ENCODE measurements at regions of chr11 and their contacts with region 1.

Region 1: GRCh38 chr11:77019976-77020595 is 14.1 kb upstream of the B3GNT6 start:
- DNase-seq: no peak
- ATAC-seq: no peak
- H3K4me3 ChIP-seq: no peak overlapping the region
- H3K4me3 Mint-ChIP-seq: no peak overlapping the region
- H3K27ac ChIP-seq: no peak overlapping the region
- H3K27ac Mint-ChIP-seq: no peak overlapping the region
- H3K4me1 ChIP-seq: no peaks in the 10 kb centered on the region
- H3K4me1 Mint-ChIP-seq: peaks cover 0 to 2% (median 0%) of the 10 kb centered on the region in 3 donors
- H3K27me3 ChIP-seq: no peaks in the 10 kb centered on the region
- H3K27me3 Mint-ChIP-seq: no peaks in the 10 kb centered on the region

Region 2: GRCh38 chr11:77630157-77630710 is 610.1 kb after region 1 on chr11:
- CTCF ChIA-PET with region 1: no interaction called
- POLR2A ChIA-PET with region 1: interaction called in 1 of 2 experiments, 11 read pairs
- DNase-seq: no peak
- ATAC-seq: no peak
- H3K4me3 ChIP-seq: no peak overlapping the region
- H3K4me3 Mint-ChIP-seq: no peak overlapping the region
- H3K27ac ChIP-seq: no peak overlapping the region
- H3K27ac Mint-ChIP-seq: no peak overlapping the region
- H3K4me1 ChIP-seq: peaks cover 5 to 9% of the 10 kb centered on the region in 2 experiments
- H3K4me1 Mint-ChIP-seq: peaks cover 25 to 35% (median 34%) of the 10 kb centered on the region in 3 donors
- H3K27me3 ChIP-seq: no peaks in the 10 kb centered on the region
- H3K27me3 Mint-ChIP-seq: no peaks in the 10 kb centered on the region